ENCODE measurements at regions of chr2 and their contacts with region 1.

Region 1: GRCh38 chr2:10546975-10547391 is 98.9 kb upstream of the ODC1 start:
- DNase-seq: peak; percentile 67 to 98
- H3K4me3 ChIP-seq: peak overlapping the region; percentile 42; the same call in 1 of the 2 replicates
- H3K27ac ChIP-seq: peak overlapping the region; percentile 69
- H3K4me1 ChIP-seq: peaks cover 40% of the 10 kb centered on the region
- H3K27me3 ChIP-seq: no peaks in the 10 kb centered on the region
- CTCF ChIP-seq: no peak

Region 2: GRCh38 chr2:10452956-10453904 is 93.8 kb before region 1 on chr2:
- CTCF ChIA-PET with region 1: no interaction called
- POLR2A ChIA-PET with region 1: no interaction called
- intact Hi-C with region 1: loop called (anchors 1 kb)
- DNase-seq: no peak
- H3K4me3 ChIP-seq: no peak overlapping the region
- H3K27ac ChIP-seq: no peak overlapping the region
- H3K4me1 ChIP-seq: peaks cover 37% of the 10 kb centered on the region
- H3K27me3 ChIP-seq: no peaks in the 10 kb centered on the region
- CTCF ChIP-seq: no peak

Region 3: DNA sequence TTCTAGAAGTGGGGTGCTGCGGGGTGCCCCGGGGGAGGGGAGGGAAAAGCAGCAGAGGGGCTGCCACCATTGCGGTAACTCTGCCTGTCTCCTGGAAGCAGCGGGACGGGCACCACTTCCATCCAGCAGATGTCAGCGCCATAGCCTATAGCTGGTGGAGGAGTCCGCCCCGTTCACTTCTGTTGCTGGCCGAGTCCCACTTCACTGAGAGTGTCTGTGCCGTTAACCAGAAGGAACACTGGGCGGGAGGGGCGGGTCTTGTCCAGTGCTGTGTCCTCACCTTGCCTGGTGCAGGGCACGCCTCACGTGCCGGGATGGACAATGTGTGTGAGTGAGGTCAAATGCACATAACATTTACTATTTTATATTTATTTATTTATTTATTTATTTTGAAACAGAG is 79.6 kb before region 1 on chr2:
- CTCF ChIA-PET with region 1: no interaction called
- POLR2A ChIA-PET with region 1: no interaction called
- intact Hi-C with region 1: no loop called
- DNase-seq: no peak
- H3K4me3 ChIP-seq: no peak overlapping the region
- H3K27ac ChIP-seq: no peak overlapping the region
- H3K4me1 ChIP-seq: no peaks in the 10 kb centered on the region
- H3K27me3 ChIP-seq: no peaks in the 10 kb centered on the region
- CTCF ChIP-seq: no peak

Region 4: DNA sequence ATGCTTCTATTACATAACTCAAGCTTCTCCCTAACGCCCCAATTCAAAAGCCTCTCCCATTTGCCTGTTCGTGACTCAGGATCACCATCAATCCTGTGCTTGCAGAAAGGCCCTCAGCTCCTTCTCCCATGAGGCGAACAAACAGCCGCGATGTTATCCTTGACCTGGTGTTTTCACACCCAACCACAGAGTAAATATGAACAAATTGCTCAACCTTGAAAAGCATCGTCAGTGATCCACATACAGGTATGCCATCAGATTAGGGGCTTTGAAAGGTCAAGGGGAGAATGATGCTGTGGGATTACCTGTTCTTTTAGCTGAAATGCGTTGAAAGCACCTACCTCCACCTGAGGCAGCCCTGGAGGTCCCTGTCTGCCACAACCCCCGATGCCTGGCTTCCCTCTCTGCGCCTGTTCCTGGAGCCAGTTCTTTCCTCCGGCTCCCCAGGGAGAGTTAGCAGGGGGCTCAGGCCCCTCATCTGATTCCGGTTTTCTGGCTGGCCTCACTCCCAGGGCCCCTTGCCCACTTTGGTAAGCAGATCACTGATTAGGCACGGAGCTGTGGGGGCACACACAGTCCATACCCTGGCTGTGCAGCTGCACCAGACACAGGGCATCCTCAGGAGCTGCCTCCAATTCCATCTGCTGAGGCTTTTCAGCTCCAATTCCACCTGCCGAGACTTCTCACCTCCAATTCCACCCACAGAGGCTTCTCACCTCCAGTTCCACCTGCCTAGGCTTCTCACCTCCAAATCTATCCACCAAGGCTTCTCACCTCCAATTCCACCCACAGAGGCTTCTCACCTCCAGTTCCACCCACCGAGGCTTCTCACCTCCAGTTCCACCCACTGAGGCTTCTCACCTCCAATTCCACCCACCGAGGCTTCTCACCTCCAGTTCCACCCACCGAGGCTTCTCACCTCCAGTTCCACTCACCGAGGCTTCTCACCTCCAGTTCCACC is 59.6 kb before region 1 on chr2:
- CTCF ChIA-PET with region 1: interaction called, 12 read pairs
- POLR2A ChIA-PET with region 1: no interaction called
- intact Hi-C with region 1: loop called (anchors 1 kb)
- DNase-seq: peak; percentile 65 to 99
- H3K4me3 ChIP-seq: no peak overlapping the region; the same call in 1 of the 2 replicates
- H3K27ac ChIP-seq: no peak overlapping the region
- H3K4me1 ChIP-seq: peaks cover 26% of the 10 kb centered on the region
- H3K27me3 ChIP-seq: peaks cover 16% of the 10 kb centered on the region
- CTCF ChIP-seq: no peak

Region 5: GRCh38 chr2:10493636-10494281 is 53.2 kb before region 1 on chr2:
- CTCF ChIA-PET with region 1: interaction called, 12 read pairs
- POLR2A ChIA-PET with region 1: no interaction called
- intact Hi-C with region 1: loop called (anchors 1 kb)
- DNase-seq: peak; percentile 91 to 97
- H3K4me3 ChIP-seq: no peak overlapping the region
- H3K27ac ChIP-seq: peak overlapping the region; percentile 61
- H3K4me1 ChIP-seq: peaks cover 41% of the 10 kb centered on the region
- H3K27me3 ChIP-seq: no peaks in the 10 kb centered on the region
- CTCF ChIP-seq: no peak

Region 6: DNA sequence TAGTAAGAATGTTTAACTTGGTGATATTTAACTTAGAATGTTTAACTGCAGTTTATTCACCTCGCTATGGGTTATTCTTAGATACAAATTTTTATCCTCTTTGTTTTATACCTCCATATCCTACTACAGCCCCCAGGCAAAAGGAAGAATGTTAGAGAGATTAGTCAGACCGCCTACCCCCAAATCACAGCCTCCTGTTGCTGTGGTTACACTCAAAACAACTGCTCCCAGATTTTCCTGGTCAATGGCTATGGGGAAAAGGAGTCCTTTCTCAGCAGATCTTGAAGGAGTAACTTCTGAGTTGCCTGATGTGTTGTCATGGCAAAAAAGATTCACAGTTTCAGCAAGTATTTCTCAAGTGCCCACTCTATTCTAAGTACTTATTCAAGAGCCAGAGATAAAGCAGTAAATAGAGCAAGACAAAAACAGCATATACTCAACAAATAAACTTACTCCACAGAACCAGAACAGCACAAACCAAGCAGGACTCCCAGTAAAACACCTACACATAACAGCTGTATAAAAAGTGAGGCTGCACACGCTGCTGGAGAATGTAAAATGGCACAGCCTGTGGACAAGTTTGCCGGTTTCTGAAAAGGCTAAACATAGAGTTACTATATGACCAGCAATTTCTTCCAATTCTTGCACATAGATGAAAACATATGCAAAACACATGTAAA is 38.0 kb after region 1 on chr2:
- CTCF ChIA-PET with region 1: no interaction called
- POLR2A ChIA-PET with region 1: no interaction called
- intact Hi-C with region 1: loop called (anchors 1 kb)
- DNase-seq: peak; percentile 73 to 98
- H3K4me3 ChIP-seq: peak overlapping the region; percentile 13; the same call in 1 of the 2 replicates
- H3K27ac ChIP-seq: peak overlapping the region; percentile 72
- H3K4me1 ChIP-seq: peaks cover 28% of the 10 kb centered on the region
- H3K27me3 ChIP-seq: no peaks in the 10 kb centered on the region
- CTCF ChIP-seq: no peak

Measured in PC-9 (cell line).